Heart left ventricle (tissue), 16 donors: ENCODE measurements at regions of chr17 and their contacts with region 1.

Region 1: GRCh38 chr17:12037970-12038369 is 17.3 kb downstream of the MAP2K4 start:
- DNase-seq: no peak
- ATAC-seq: no peak
- H3K4me3 ChIP-seq: no peak overlapping the region
- H3K27ac ChIP-seq: no peak overlapping the region
- H3K4me1 ChIP-seq: peaks cover 0 to 35% (median 7%) of the 10 kb centered on the region in 12 donors
- H3K27me3 ChIP-seq: no peaks in the 10 kb centered on the region
- CTCF ChIP-seq: no peak
- POLR2A ChIP-seq: no peak

Region 2: DNA sequence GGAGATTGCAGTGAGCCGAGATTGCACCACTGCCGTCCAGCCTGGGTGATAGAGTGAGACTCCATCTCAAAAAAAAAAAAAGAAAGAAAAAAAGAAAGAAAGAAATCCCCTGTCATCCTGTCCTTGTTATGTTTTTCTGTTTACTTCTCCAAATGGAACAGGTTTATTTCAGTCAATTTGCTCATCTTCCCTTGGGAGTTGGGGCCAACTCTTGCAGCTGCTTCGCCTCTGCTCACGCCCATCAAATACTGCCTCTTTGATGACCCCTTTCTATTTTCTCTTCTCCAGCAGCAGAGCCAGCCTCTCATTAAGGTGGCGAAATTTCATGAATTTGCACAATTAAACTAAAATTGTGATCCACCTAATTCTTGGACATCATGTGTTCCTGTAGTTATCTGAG is 214.1 kb before region 1 on chr17:
- intact Hi-C with region 1: no loop called
- DNase-seq: no peak
- ATAC-seq: no peak
- H3K4me3 ChIP-seq: no peak overlapping the region
- H3K27ac ChIP-seq: no peak overlapping the region
- H3K4me1 ChIP-seq: peaks cover 0 to 4% (median 0%) of the 10 kb centered on the region in 12 donors
- H3K27me3 ChIP-seq: no peaks in the 10 kb centered on the region
- CTCF ChIP-seq: no peak
- POLR2A ChIP-seq: no peak

Region 3: DNA sequence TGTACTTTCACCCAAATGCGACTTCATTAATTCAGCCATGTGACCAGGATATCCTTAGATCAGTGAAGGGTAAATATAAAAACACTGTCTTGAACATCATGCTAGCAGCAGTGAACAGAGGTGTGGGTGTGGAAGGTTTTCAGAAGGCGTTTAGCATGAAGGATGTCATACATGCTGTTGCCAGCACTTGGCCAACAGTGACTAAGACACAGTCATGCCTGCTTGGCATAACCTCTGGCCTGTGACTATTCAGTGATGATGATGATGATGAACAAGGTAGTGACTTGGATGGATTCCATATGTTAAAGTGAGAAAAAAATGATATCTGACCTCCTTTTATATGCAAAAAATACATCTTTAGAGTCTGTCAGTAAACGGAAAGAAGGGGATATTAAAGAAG is 80.6 kb after region 1 on chr17:
- intact Hi-C with region 1: loop called in 1 of 10 experiments (anchors 10 kb)
- DNase-seq: no peak
- ATAC-seq: no peak
- H3K4me3 ChIP-seq: no peak overlapping the region
- H3K27ac ChIP-seq: no peak overlapping the region
- H3K4me1 ChIP-seq: peaks cover 0 to 12% (median 4%) of the 10 kb centered on the region in 12 donors
- H3K27me3 ChIP-seq: no peaks in the 10 kb centered on the region
- CTCF ChIP-seq: no peak
- POLR2A ChIP-seq: no peak